ENCODE measurements at regions of chr15 and their contacts with region 1.

Region 1: DNA sequence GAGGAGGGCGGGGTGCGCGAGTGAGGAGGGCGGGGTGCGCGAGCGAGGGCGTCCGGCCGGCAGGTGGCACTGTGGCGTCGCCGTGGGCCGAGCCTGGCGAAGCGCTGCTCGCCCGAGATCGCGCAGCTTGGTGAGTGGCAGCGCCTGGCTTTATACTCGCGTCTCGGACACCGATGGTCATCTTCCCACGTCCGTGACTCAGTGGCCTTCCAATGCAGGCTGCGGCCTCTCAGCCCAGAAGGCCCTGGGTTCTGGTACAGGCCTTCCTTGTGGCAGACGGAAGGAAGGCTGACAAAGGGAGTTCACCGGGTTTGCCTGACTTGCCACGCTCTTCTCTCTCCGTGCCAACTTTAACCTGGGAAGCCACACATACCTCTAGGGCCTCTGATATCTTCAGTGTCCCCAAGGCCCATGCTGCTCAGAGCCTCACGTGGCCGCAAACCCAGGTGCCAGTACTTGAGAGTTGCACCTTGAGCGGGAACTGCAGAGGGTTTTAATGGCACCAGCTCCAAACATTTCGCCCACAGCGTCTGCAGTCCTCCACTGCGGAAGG is 195.3 kb upstream of the LYSMD4 start:
- DNase-seq: peak; percentile 87
- H3K4me3 ChIP-seq: peak overlapping the region; percentile 15 to 57 (median 28)
- H3K27ac ChIP-seq: peak overlapping the region; percentile 73 to 89 (median 78)
- H3K4me1 ChIP-seq: peaks cover 4 to 19% (median 8%) of the 10 kb centered on the region in 4 donors
- H3K27me3 ChIP-seq: peaks cover 12% of the 10 kb centered on the region
- CTCF ChIP-seq: peak; percentile 58 to 80 (median 66)
- EP300 ChIP-seq: no peak
- POLR2A ChIP-seq: no peak

Region 2: GRCh38 chr15:99568625-99569352 is 359.7 kb before region 1 on chr15:
- in situ Hi-C with region 1: no loop called
- intact Hi-C with region 1: no loop called
- DNase-seq: no peak
- H3K4me3 ChIP-seq: no peak overlapping the region
- H3K27ac ChIP-seq: peak overlapping the region in 3 of 4 donors; percentile 97 to 99 (median 98)
- H3K4me1 ChIP-seq: peaks cover 10 to 49% (median 24%) of the 10 kb centered on the region in 4 donors
- H3K27me3 ChIP-seq: no peaks in the 10 kb centered on the region
- CTCF ChIP-seq: no peak
- EP300 ChIP-seq: no peak
- POLR2A ChIP-seq: no peak

Region 3: GRCh38 chr15:100060276-100061255 is 132.1 kb after region 1 on chr15:
- in situ Hi-C with region 1: no loop called
- intact Hi-C with region 1: no loop called
- DNase-seq: peak; percentile 16
- H3K4me3 ChIP-seq: no peak overlapping the region
- H3K27ac ChIP-seq: no peak overlapping the region
- H3K4me1 ChIP-seq: no peaks in the 10 kb centered on the region
- H3K27me3 ChIP-seq: no peaks in the 10 kb centered on the region
- CTCF ChIP-seq: no peak
- EP300 ChIP-seq: no peak
- POLR2A ChIP-seq: no peak

Region 4: DNA sequence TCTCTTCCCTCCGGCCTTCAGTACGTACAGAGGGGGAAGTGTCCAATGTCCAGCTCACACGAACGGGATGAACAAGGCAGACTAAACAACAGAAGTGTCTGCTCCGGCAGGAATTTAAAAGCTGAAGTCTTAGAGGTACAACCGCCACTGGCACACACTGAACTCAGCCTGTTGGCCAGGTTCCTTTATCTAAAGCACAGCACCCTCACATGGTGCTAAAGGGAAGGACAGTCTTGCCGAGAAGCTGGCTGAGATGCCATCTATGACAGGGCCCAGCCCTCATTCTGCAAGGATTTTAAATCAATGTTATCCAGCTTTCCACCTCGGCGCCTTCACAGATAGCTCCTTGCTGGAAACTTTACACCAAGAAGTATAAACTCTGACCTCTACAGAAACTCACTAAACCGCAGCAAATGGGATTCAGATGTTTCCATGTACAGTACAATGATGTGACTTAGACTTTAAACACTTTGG is 410.5 kb after region 1 on chr15:
- in situ Hi-C with region 1: loop called (anchors 5 to 10 kb)
- intact Hi-C with region 1: loop called (anchors 2 kb)
- DNase-seq: peak; percentile 76
- H3K4me3 ChIP-seq: no peak overlapping the region
- H3K27ac ChIP-seq: no peak overlapping the region
- H3K4me1 ChIP-seq: peaks cover 3 to 20% (median 4%) of the 10 kb centered on the region in 4 donors
- H3K27me3 ChIP-seq: peaks cover 8% of the 10 kb centered on the region
- CTCF ChIP-seq: peak; percentile 73 to 86 (median 79)
- EP300 ChIP-seq: no peak
- POLR2A ChIP-seq: no peak

Region 5: GRCh38 chr15:100572362-100572983 is 644.0 kb after region 1 on chr15:
- in situ Hi-C with region 1: loop called in 2 of 4 experiments (anchors 25 kb)
- intact Hi-C with region 1: no loop called
- DNase-seq: no peak
- H3K4me3 ChIP-seq: no peak overlapping the region
- H3K27ac ChIP-seq: no peak overlapping the region
- H3K4me1 ChIP-seq: no peaks in the 10 kb centered on the region
- H3K27me3 ChIP-seq: no peaks in the 10 kb centered on the region
- CTCF ChIP-seq: peak; percentile 35 to 66 (median 54)
- EP300 ChIP-seq: no peak
- POLR2A ChIP-seq: no peak

Region 6: DNA sequence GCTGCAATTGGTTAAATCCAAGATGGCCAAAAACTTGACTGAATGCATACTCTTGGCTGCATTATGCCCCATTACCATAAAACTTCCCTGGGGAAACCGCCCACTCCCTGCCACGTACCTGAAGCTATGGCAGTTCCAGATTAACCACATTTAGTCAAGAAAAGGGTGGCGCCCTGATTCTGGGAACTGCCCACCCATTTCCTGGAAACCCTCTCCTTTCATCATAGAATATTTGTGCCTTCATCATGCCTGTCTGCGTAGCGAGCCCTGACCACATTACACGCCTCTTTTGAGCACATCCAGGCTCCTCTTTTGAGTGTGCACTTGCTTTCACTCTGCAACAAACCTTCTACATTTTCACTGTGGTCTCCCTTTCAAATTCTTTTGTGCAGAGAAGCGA is 668.3 kb after region 1 on chr15:
- in situ Hi-C with region 1: loop called in 1 of 4 experiments (anchors 25 kb)
- intact Hi-C with region 1: no loop called
- DNase-seq: peak; percentile 48
- H3K4me3 ChIP-seq: no peak overlapping the region
- H3K27ac ChIP-seq: peak overlapping the region; percentile 3 to 31 (median 14)
- H3K4me1 ChIP-seq: peaks cover 4 to 37% (median 9%) of the 10 kb centered on the region in 4 donors
- H3K27me3 ChIP-seq: no peaks in the 10 kb centered on the region
- CTCF ChIP-seq: no peak
- EP300 ChIP-seq: no peak
- POLR2A ChIP-seq: no peak

Measured in transverse colon (tissue), 4 donors.